Esophagus muscularis mucosa (tissue), 4 donors: ENCODE measurements at regions of chr1 and their contacts with region 1.

Region 1: GRCh38 chr1:207084701-207085180 is 3.9 kb upstream of the C4BPB start:
- DNase-seq: no peak
- H3K4me3 ChIP-seq: no peak overlapping the region
- H3K27ac ChIP-seq: no peak overlapping the region
- H3K4me1 ChIP-seq: peaks cover 0 to 6% (median 2%) of the 10 kb centered on the region in 4 donors
- H3K27me3 ChIP-seq: no peaks in the 10 kb centered on the region
- CTCF ChIP-seq: peak; percentile 37 to 57 (median 50)
- EP300 ChIP-seq: no peak
- POLR2A ChIP-seq: no peak

Region 2: DNA sequence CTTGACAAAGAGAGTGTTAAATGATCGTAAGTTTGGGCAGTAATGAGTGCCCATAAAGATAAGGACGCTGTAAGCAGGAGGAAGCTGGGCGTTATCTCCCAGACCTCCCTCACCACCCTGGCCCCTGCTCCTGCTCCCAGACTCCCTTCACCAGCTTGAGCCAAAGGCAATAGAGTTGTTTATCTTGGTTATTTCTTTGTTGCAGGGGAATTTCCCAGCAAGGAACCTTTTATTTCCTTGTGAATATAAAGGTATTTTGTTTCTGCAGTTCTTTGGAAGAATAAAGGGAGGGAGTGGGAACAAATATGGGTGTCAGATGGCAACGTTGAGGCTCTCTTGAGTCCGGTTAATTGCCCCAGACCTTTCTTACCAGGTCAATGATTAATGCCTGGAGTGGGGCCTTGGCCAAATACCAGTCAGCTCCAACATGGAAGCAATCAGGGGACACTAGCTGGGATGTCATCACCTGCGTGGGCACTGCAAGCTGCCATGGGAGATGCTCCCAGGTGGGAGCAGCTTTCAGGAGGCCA is 142.8 kb before region 1 on chr1:
- intact Hi-C with region 1: no loop called
- DNase-seq: no peak
- H3K4me3 ChIP-seq: no peak overlapping the region
- H3K27ac ChIP-seq: no peak overlapping the region
- H3K4me1 ChIP-seq: no peaks in the 10 kb centered on the region
- H3K27me3 ChIP-seq: peaks cover 0 to 21% (median 0%) of the 10 kb centered on the region in 4 donors
- CTCF ChIP-seq: no peak
- EP300 ChIP-seq: no peak
- POLR2A ChIP-seq: no peak

Region 3: DNA sequence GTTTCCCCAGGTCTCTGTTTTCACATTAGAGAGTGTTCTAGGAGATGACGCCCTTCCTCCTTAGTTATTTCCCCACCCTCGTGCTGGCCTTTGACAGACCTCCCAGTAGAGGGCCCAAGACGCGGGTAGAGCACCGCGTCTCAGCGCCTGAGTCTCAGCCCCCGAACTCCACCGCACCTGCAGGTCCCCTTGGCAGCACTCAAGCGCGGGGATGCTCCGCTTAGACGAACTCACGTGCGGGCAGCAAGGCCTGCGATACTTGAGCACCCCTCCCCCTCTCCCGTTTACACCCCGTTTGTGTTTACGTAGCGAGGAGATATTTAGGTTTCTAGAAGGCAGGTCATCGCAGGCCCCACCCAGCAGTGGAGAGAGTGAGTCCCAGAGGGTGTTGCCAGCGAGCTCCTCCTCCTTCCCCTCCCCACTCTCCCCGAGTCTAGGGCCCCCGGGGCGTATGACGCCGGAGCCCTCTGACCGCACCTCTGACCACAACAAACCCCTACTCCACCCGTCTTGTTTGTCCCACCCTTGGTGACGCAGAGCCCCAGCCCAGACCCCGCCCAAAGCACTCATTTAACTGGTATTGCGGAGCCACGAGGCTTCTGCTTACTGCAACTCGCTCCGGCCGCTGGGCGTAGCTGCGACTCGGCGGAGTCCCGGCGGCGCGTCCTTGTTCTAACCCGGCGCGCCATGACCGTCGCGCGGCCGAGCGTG is 236.5 kb after region 1 on chr1 and contains the start of gene CD55:
- intact Hi-C with region 1: loop called (anchors 10 kb)
- DNase-seq: peak; percentile 99
- H3K4me3 ChIP-seq: peak within 1 kb of the TSS; percentile 86 to 99 (median 95)
- H3K27ac ChIP-seq: peak within 1 kb of the TSS; percentile 90 to 97 (median 93)
- H3K4me1 ChIP-seq: peaks cover 8 to 27% (median 21%) of the 10 kb centered on the region in 4 donors
- H3K27me3 ChIP-seq: no peaks in the 10 kb centered on the region
- CTCF ChIP-seq: peak in 2 of 3 experiments; percentile 13 to 29
- EP300 ChIP-seq: no peak
- POLR2A ChIP-seq: peak; percentile 92
- total RNA-seq, gene CD55: 27.8 to 77.0 (median 47.4) TPM